Activated CD4-positive, alpha-beta T cell treated with anti-CD3 and anti-CD28 coated beads for 36 hours (primary cell): ENCODE measurements at regions of chr2 and their contacts with region 1.

Region 1: GRCh38 chr2:110881908-110882307 is 149.5 kb downstream of the ACOXL start:
- DNase-seq: peak; percentile 39
- ATAC-seq: peak; percentile 80
- H3K4me3 Mint-ChIP-seq: no peak overlapping the region
- H3K27ac Mint-ChIP-seq: no peak overlapping the region
- H3K4me1 Mint-ChIP-seq: peaks cover 6% of the 10 kb centered on the region
- H3K27me3 Mint-ChIP-seq: peaks cover 32% of the 10 kb centered on the region

Region 2: GRCh38 chr2:110812726-110813645 is 68.9 kb before region 1 on chr2:
- CTCF ChIA-PET with region 1: interaction called, 3 read pairs
- POLR2A ChIA-PET with region 1: no interaction called
- intact Hi-C with region 1: loop called in 1 of 2 experiments (anchors 2 kb)
- DNase-seq: no peak
- ATAC-seq: no peak
- H3K4me3 Mint-ChIP-seq: no peak overlapping the region
- H3K27ac Mint-ChIP-seq: no peak overlapping the region
- H3K4me1 Mint-ChIP-seq: peaks cover 5% of the 10 kb centered on the region
- H3K27me3 Mint-ChIP-seq: peaks cover 42% of the 10 kb centered on the region